ENCODE measurements at regions of chr19 and their contacts with region 1.

Region 1: DNA sequence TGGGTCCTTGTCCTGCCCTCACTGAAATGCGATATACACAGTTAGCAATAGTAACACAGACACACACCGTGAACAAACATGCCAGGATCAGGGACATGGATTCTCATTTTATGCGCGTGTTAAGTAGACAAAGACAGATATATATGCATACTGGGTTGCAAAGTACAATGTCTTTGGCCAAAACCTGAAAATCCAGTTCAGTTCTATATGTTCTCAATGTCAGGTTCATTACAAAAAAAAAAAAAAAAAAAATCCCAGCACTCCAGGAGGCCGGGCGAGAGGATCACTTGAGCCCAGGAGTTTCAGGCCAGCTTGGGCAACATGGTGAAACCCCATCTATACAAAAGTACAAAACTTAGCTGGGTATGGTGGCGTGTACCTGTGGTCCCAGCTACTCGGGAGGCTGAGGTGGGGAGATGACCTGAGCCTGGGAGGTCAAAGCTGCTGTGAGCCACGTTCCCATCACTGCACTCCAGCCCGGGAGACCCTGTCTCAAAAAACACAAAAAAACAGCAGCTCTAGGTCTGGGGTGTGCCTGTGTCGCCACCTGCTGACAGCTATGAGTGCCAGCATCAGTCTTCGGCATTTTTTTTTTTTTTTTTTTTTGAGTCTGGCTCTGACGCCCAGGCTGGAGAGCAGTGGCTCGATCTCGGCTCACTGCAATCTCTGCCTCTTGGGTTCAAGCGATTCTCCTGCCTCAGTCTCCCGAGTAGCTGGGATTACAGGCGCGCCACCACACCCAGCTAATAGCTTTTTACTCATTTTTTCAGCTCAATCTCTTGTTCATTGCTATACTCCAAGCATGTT is 10.3 kb downstream of the AP2S1 start:
- DNase-seq: peak; percentile 60
- H3K4me3 Mint-ChIP-seq: peak overlapping the region; percentile 51
- H3K27ac Mint-ChIP-seq: peak overlapping the region; percentile 82
- H3K4me1 Mint-ChIP-seq: peaks cover 47% of the 10 kb centered on the region
- H3K27me3 Mint-ChIP-seq: no peaks in the 10 kb centered on the region
- CTCF ChIP-seq: peak; percentile 88

Region 2: DNA sequence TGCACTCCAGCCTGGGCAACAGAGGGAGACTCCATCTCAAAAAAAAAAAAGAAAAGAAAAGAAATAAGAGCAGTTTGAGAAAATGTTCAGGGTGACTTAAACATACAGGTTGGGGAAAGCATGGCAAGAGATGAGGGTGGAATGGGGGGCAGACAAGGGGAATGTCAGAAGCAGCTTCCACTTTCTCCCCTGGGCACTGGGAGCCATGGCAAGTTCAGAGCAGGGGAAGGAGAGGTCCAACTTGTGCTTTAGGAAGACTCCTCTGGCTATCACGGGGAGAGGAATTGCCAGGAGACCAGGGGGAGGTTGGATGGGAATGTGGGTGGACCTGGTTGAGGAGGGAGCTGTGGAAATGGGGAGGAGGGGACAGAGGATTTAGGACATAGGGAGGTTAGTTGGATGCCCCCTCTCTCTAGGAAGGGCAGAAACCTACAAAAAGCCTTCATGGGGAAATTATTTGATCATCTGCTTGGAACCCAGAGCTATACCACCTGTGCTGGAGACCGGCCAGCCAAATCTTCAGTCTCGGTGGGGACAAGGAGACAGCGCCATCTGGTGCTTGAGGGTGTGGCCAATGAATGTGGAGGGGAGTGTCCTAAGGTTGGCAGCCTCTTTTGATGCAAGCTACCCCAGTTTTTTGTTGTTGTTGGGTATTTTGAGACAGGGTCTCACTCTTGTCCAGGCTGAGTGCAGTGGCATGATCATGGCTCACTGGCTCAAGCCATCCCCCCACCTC is 86.8 kb before region 1 on chr19:
- CTCF ChIA-PET with region 1: interaction called, 49 read pairs
- intact Hi-C with region 1: loop called (anchors 2 kb)
- DNase-seq: peak; percentile 60
- H3K4me3 Mint-ChIP-seq: no peak overlapping the region
- H3K27ac Mint-ChIP-seq: peak overlapping the region; percentile 8
- H3K4me1 Mint-ChIP-seq: no peaks in the 10 kb centered on the region
- H3K27me3 Mint-ChIP-seq: no peaks in the 10 kb centered on the region
- CTCF ChIP-seq: no peak

Region 3: GRCh38 chr19:46764817-46765291 is 75.5 kb before region 1 on chr19:
- CTCF ChIA-PET with region 1: interaction called, 14 read pairs
- intact Hi-C with region 1: no loop called
- DNase-seq: peak; percentile 68
- H3K4me3 Mint-ChIP-seq: no peak overlapping the region
- H3K27ac Mint-ChIP-seq: no peak overlapping the region
- H3K4me1 Mint-ChIP-seq: peaks cover 20% of the 10 kb centered on the region
- H3K27me3 Mint-ChIP-seq: no peaks in the 10 kb centered on the region
- CTCF ChIP-seq: no peak

Region 4: GRCh38 chr19:46825525-46825971 is 14.8 kb before region 1 on chr19:
- CTCF ChIA-PET with region 1: interaction called, 28 read pairs
- intact Hi-C with region 1: no loop called
- DNase-seq: no peak
- H3K4me3 Mint-ChIP-seq: no peak overlapping the region
- H3K27ac Mint-ChIP-seq: no peak overlapping the region
- H3K4me1 Mint-ChIP-seq: peaks cover 12% of the 10 kb centered on the region
- H3K27me3 Mint-ChIP-seq: no peaks in the 10 kb centered on the region
- CTCF ChIP-seq: no peak